ENCODE measurements at regions of chr14 and their contacts with region 1.

Region 1: DNA sequence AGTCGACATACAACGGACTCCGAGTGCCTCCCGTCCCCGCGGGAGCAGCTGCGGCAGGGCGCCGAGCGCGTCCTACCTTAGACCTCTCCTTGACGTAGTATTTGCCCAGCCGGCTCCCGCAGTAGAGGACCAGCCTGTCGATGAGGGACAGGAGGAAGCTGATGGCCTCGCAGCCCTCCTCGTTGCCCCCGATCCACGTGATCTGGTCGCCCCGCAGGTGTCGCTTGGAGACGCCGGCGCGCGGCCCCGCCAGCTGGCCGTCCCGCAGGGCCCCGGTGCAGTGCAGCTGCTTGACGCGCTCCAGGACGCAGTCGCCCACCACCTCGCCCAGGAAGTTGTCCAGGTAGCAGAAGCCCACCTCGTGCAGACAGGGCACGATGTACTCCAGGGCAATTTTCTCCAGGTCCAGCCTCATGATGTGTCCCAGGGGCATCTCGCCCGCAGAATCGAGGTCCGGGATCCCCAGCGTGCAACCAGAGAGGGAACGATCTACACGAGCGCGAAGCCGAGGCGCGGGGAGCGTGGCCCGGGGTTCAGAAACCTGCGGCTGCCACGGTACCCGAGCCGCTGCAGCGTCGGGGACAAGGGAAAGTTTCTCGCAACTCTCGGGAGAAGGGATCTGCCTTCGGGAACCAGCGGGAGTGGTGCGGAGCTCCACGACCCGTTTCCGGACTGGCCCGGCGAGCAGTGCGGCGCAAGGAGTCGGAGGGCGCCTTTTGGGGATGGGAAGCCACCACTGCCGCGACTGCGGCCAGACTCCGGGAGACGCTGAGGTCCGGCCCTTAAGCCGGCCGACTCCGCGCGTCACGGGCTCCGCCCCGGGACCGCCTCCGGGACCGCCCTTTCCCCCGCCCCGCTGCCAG is at the start of gene EGLN3:
- DNase-seq: peak; percentile 95
- H3K4me3 Mint-ChIP-seq: peak within 1 kb of the TSS; percentile 87
- H3K27ac Mint-ChIP-seq: peak within 1 kb of the TSS; percentile 75
- H3K4me1 Mint-ChIP-seq: peaks cover 36% of the 10 kb centered on the region
- H3K27me3 Mint-ChIP-seq: peaks cover 47% of the 10 kb centered on the region
- total RNA-seq, gene EGLN3: 17.4 and 17.6 TPM in 2 replicates

Region 2: DNA sequence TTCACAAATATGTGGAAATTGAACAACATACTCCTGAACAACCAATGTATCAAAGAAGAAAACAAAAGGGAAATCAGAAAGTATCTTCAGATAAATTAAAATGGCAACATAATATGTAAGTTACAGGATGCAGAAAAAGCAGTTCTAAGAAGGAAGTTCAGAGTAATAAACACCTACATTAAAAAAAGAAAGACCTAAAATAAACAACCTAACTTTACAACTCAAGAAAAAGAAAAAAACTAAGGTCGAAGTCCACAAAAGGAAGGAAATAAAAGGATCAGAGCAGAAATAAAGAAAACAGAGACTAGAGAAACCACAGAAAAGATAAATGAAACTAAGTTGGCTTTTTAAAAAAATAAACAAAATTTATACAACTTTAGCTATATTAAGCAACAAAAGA is 58.9 kb before region 1 on chr14:
- intact Hi-C with region 1: no loop called
- DNase-seq: no peak
- H3K4me3 Mint-ChIP-seq: peak overlapping the region; percentile 13
- H3K27ac Mint-ChIP-seq: no peak overlapping the region
- H3K4me1 Mint-ChIP-seq: peaks cover 9% of the 10 kb centered on the region
- H3K27me3 Mint-ChIP-seq: peaks cover 12% of the 10 kb centered on the region

Region 3: DNA sequence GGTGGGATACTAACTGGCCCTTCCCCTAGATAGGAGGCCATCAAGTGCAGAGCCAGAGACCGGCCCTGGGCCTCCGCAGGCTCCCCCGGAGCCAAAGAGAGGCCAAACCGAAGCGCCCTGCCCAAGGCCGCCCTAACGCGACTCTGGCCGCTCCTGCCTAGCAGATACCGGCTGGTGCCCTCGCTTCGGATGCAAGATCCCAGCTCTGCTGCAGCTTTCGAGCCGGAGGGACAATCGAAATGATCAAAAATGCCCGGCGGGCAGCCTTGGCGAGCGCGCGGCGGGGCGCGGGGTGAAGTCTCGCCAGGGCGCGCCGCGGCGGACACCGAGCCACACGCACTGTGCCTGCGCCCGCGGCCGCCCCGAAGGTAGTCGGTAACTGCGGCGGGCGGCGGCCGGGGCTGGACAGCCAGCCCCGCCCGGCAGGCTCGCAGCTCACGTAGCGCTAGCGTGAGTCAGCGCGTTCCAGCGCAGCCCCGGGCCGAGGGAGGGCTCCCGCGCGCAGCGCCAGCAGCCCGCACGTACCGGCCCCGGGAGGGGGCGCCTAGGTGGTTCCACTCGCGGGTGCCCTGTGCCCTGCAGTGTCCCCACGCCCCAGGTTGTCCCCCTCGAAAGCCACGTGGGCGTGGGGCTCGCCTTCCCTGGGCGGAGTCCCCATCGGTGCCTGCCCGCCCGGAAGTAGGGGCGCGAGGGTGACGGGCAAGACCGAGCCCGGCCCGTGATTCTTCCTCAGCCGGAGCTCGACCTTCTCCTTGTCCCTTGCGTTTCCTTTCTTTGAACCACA is 109.5 kb after region 1 on chr14:
- intact Hi-C with region 1: loop called (anchors 5 kb)
- DNase-seq: peak; percentile 91
- H3K4me3 Mint-ChIP-seq: peak overlapping the region; percentile 86
- H3K27ac Mint-ChIP-seq: peak overlapping the region; percentile 87
- H3K4me1 Mint-ChIP-seq: peaks cover 35% of the 10 kb centered on the region
- H3K27me3 Mint-ChIP-seq: peaks cover 10% of the 10 kb centered on the region

Region 4: GRCh38 chr14:34098045-34098984 is 147.8 kb after region 1 on chr14:
- intact Hi-C with region 1: loop called (anchors 5 kb)
- DNase-seq: peak; percentile 82
- H3K4me3 Mint-ChIP-seq: no peak overlapping the region
- H3K27ac Mint-ChIP-seq: peak overlapping the region; percentile 12
- H3K4me1 Mint-ChIP-seq: peaks cover 42% of the 10 kb centered on the region
- H3K27me3 Mint-ChIP-seq: peaks cover 2% of the 10 kb centered on the region

Region 5: DNA sequence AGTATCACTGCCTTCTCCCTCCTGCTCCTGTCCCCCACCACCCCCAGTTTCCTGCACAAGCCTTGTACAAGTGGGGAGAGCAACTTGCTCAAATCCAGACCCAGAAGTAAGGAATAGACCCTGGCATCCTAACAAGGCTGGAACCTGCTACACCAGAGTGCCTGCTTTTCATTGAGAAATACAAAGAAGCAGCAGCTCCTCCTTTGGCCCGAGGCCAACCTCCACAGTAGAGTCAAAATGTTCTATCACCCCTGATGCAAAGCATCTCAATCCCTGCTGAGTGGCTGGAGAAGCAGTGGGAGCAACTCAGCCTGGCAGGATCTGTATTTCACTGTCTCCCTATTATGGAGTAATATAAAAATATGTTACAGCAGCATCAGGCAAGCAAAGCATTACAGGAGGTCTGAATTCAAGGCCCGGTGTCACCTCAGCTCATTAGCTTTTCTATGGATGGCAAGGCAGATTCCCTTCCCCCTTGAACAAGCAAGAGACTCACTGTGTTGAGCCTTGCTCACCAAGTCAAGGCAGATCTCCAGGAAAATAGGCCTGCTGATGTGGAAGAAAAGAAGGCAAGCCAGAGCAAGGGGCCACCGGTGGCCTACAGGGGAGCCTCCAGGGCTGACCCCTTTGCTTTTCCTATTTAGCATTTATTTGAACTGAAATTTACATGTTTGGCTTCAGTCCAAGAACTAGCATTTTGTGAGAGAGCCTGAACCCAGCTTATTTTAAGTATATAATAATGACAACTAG is 186.6 kb after region 1 on chr14:
- intact Hi-C with region 1: no loop called
- DNase-seq: no peak
- H3K4me3 Mint-ChIP-seq: no peak overlapping the region
- H3K27ac Mint-ChIP-seq: no peak overlapping the region
- H3K4me1 Mint-ChIP-seq: no peaks in the 10 kb centered on the region
- H3K27me3 Mint-ChIP-seq: peaks cover 14% of the 10 kb centered on the region

Measured in activated CD4-positive, alpha-beta T cell treated with anti-CD3 and anti-CD28 coated beads, Interleukin-2, amount 10 ng/mL, durations not matched to agents 24 days and 14 days (primary cell).